ENCODE measurements at regions of chr2 and their contacts with region 1.

Region 1: GRCh38 chr2:65574993-65575392 is 142.6 kb upstream of the SPRED2 start:
- DNase-seq: no peak
- ATAC-seq: no peak
- H3K4me3 ChIP-seq: no peak overlapping the region
- H3K27ac ChIP-seq: no peak overlapping the region
- H3K4me1 ChIP-seq: no peaks in the 10 kb centered on the region
- H3K27me3 ChIP-seq: no peaks in the 10 kb centered on the region
- CTCF ChIP-seq: no peak

Region 2: GRCh38 chr2:65264821-65265670 is 309.9 kb before region 1 on chr2:
- intact Hi-C with region 1: loop called in 1 of 2 experiments (anchors 5 kb)
- DNase-seq: no peak
- ATAC-seq: peak; percentile 49 to 80 (median 70)
- H3K4me3 ChIP-seq: no peak overlapping the region
- H3K27ac ChIP-seq: no peak overlapping the region
- H3K4me1 ChIP-seq: peaks cover 4% of the 10 kb centered on the region
- H3K27me3 ChIP-seq: no peaks in the 10 kb centered on the region
- CTCF ChIP-seq: peak; percentile 73

Region 3: GRCh38 chr2:65620524-65620923 is 45.5 kb after region 1 on chr2:
- intact Hi-C with region 1: no loop called
- DNase-seq: no peak
- ATAC-seq: no peak
- H3K4me3 ChIP-seq: no peak overlapping the region
- H3K27ac ChIP-seq: no peak overlapping the region
- H3K4me1 ChIP-seq: no peaks in the 10 kb centered on the region
- H3K27me3 ChIP-seq: no peaks in the 10 kb centered on the region
- CTCF ChIP-seq: no peak